T-cell (primary cell): ENCODE measurements at regions of chr1 and their contacts with region 1.

Region 1: DNA sequence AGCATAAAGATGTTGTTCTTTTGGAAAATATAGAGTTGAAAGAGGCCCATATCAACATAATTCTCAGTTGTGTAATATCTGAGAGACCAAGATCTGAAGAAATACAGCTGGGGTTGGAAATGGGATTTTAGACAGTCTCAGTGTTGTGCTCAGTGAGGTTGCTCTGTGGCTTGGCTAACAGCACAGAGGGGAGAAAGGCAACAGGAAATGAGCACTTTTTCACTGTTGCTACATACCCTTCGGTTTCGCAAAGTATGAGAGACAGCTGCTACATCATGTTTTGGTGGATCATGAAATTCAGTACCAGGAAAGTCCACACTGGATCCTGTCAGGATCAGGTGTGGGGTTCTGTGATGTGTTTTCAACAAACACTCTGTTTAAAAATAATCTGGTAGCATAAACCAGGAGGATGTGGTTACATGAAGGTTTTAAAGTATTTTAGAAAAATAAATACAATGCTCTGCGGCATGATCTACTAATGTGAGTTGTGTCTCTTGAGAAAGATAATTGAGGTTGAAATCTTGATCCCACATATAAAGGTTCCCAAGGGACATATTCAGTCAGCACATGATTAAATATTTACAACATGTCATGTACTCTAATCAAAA is 7.0 kb upstream of the GPR88 start:
- DNase-seq: peak in 7 of 35 experiments; percentile 6 to 47 (median 19)
- ATAC-seq: peak; percentile 83 to 96 (median 91)
- H3K4me3 ChIP-seq: no peak overlapping the region
- H3K4me3 Mint-ChIP-seq: peak overlapping the region; percentile 5 to 32 (median 15)
- H3K27ac ChIP-seq: peak overlapping the region; percentile 1
- H3K27ac Mint-ChIP-seq: peak overlapping the region; percentile 88 to 91
- H3K4me1 ChIP-seq: peaks cover 16 to 21% of the 10 kb centered on the region in 2 experiments
- H3K4me1 Mint-ChIP-seq: peaks cover 34 to 40% (median 38%) of the 10 kb centered on the region in 3 donors
- H3K27me3 ChIP-seq: no peaks in the 10 kb centered on the region
- H3K27me3 Mint-ChIP-seq: peaks cover 5 to 8% of the 10 kb centered on the region in 2 donors

Region 2: GRCh38 chr1:100459358-100460114 is 71.4 kb before region 1 on chr1:
- CTCF ChIA-PET with region 1: no interaction called
- POLR2A ChIA-PET with region 1: no interaction called
- DNase-seq: peak; percentile 26 to 86 (median 58)
- ATAC-seq: peak; percentile 77 to 89 (median 83)
- H3K4me3 ChIP-seq: no peak overlapping the region
- H3K4me3 Mint-ChIP-seq: no peak overlapping the region
- H3K27ac ChIP-seq: peak overlapping the region; percentile 22
- H3K27ac Mint-ChIP-seq: peak overlapping the region; percentile 84 to 85
- H3K4me1 ChIP-seq: peaks cover 13 to 14% of the 10 kb centered on the region in 2 experiments
- H3K4me1 Mint-ChIP-seq: peaks cover 58 to 64% (median 61%) of the 10 kb centered on the region in 3 donors
- H3K27me3 ChIP-seq: no peaks in the 10 kb centered on the region
- H3K27me3 Mint-ChIP-seq: no peaks in the 10 kb centered on the region

Region 3: DNA sequence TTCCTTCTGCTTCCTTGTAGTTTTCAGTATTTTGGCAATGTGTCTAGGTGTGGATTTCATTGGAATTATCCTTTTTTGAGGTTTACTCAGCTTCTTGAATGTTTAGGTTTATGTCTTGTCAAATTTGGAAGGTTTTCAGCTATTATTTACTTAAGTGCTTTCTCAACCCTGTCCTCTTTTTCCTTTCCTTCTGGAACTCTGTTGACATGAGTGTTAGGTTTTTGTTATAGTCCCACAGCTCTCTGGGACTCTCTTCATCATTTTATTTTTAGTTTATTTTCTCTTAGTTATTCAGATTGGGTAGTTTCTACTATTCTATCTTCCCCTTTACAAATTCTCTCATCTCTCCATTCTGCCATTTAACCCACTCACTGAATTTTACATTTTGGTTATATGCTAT is 56.1 kb before region 1 on chr1:
- CTCF ChIA-PET with region 1: interaction called in 1 of 2 experiments, 11 read pairs
- POLR2A ChIA-PET with region 1: no interaction called
- DNase-seq: no peak
- ATAC-seq: no peak
- H3K4me3 ChIP-seq: no peak overlapping the region
- H3K4me3 Mint-ChIP-seq: no peak overlapping the region
- H3K27ac ChIP-seq: no peak overlapping the region
- H3K27ac Mint-ChIP-seq: peak overlapping the region; percentile 17 to 67
- H3K4me1 ChIP-seq: peaks cover 0 to 5% of the 10 kb centered on the region in 2 experiments
- H3K4me1 Mint-ChIP-seq: peaks cover 35 to 43% (median 36%) of the 10 kb centered on the region in 3 donors
- H3K27me3 ChIP-seq: no peaks in the 10 kb centered on the region
- H3K27me3 Mint-ChIP-seq: no peaks in the 10 kb centered on the region